CD14-positive monocyte (primary cell): ENCODE measurements at regions of chr11 and their contacts with region 1.

Region 1: DNA sequence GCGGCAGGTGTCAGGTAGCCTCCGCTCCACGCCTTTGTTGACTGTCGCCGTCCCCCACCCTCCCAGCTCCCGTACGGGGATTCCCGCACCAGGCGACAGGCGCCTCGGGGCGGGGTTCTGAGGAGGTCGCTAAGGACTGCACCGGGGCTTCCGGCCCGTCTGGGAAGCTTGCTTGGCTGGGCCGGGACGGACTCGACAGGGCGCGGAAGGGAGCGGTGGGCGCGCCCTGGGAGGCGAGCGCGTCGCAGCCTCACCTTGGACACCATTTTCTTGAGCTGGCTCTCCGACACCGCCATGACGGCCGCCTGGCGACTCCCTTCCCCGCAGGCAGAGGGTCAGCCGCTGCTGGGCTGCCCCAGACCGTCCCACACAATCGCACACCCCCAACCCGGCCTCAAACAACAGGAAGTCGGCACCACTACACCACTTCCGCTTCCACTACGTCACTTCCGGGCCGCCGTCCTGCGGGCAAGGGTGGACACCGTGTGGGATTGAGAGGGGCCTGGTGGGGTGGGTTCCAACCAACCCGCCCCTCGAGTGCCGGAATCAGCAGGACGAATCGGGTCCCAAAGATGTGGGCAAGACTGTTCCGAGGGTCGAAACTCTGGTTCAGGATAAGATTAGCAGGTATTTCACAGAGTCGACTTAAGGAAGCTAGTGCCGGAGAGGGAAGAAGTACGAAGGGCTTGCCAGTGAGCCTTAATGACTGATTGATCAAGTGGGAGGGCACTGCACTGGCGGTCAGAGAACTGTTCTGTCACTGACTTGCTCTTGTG is at the start of gene TSG101:
- DNase-seq: peak; percentile 90 to 97 (median 96)
- H3K4me3 ChIP-seq: peak within 1 kb of the TSS; percentile 68 to 95 (median 89)
- H3K4me3 Mint-ChIP-seq: peak within 1 kb of the TSS; percentile 94 to 99
- H3K27ac ChIP-seq: peak within 1 kb of the TSS; percentile 99 to 100
- H3K27ac Mint-ChIP-seq: peak within 1 kb of the TSS; percentile 100
- H3K4me1 ChIP-seq: peaks cover 14 to 19% of the 10 kb centered on the region in 2 donors
- H3K4me1 Mint-ChIP-seq: peaks cover 18% of the 10 kb centered on the region
- H3K27me3 ChIP-seq: no peaks in the 10 kb centered on the region
- H3K27me3 Mint-ChIP-seq: no peaks in the 10 kb centered on the region
- CTCF ChIP-seq: no peak
- polyA plus RNA-seq, gene TSG101: 76.7 to 116 (median 112) TPM

Region 2: DNA sequence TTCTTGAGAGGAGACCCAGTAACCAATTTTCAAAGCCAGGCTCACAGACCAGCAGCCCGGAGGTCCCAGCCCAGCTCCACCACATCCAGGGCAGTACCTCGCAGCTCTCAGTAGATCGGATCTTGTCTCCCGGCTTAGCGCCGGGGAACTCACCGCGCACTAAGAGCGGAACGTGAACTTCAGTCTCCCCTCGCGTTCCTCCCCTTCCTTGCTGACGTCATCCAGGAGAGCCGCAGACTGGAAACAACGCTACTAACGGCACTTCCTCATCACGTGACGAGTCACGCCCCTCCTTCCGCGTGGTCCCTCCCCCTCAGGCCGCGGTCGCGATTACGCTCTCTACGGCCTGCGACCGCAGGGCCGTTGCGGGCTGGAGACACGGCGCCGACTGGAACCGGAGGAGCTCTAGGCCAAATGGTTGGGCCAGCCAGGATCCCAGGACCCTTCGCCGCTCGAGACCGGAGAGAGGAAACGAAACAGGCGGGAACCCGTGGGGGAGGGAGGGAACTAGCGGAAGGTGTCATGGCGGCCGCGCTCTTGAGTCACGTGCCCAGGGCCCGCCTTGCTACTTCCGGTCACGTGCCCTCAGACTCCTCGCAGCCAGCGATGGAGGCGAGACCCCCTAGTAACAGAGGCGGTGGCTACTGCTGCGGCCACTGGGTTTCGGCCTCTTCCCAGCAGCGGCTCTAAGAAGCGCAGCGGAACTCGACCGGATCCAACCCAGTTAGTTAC is 204.6 kb before region 1 on chr11 and contains the starts of genes GTF2H1 and HPS5:
- intact Hi-C with region 1: loop called (anchors 5 kb)
- DNase-seq: peak; percentile 98 to 99 (median 99)
- H3K4me3 ChIP-seq: peak within 1 kb of the TSS; percentile 58 to 82 (median 82)
- H3K4me3 Mint-ChIP-seq: peak within 1 kb of the TSS; percentile 95 to 97
- H3K27ac ChIP-seq: peak within 1 kb of the TSS; percentile 93 to 94
- H3K27ac Mint-ChIP-seq: peak within 1 kb of the TSS; percentile 99 to 100 (median 100)
- H3K4me1 ChIP-seq: peaks cover 35 to 50% of the 10 kb centered on the region in 2 donors
- H3K4me1 Mint-ChIP-seq: peaks cover 60% of the 10 kb centered on the region
- H3K27me3 ChIP-seq: no peaks in the 10 kb centered on the region
- H3K27me3 Mint-ChIP-seq: no peaks in the 10 kb centered on the region
- CTCF ChIP-seq: no peak
- polyA plus RNA-seq, gene GTF2H1: 23.0 to 26.6 (median 26.2) TPM
- polyA plus RNA-seq, gene HPS5: 11.4 to 17.7 (median 12.9) TPM

Region 3: DNA sequence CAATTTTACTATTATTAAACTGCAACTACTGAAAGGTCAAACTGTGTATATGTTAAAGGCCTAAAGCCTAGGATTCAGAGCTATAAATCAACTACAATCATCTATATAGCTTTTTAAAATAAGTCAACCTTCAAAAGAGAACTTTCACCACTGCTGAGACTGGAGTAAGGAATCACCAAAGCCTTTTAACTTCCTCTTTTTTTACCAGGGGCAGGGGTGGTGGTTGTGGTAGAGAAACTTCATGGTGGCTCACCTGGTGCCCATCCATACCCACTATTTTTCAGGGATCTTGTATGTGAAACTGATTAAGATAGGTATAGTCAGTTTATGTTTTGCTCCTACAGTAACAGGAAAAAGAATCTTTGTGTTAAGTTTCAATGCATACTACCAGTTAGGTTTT is 31.4 kb before region 1 on chr11:
- intact Hi-C with region 1: no loop called
- DNase-seq: peak in 2 of 3 donors; percentile 3 to 5
- H3K4me3 ChIP-seq: no peak overlapping the region
- H3K4me3 Mint-ChIP-seq: no peak overlapping the region
- H3K27ac ChIP-seq: peak overlapping the region in 1 of 2 donors; percentile 52
- H3K27ac Mint-ChIP-seq: peak overlapping the region in 1 of 7 donors; percentile 63
- H3K4me1 ChIP-seq: no peaks in the 10 kb centered on the region
- H3K4me1 Mint-ChIP-seq: no peaks in the 10 kb centered on the region
- H3K27me3 ChIP-seq: no peaks in the 10 kb centered on the region
- H3K27me3 Mint-ChIP-seq: no peaks in the 10 kb centered on the region
- CTCF ChIP-seq: no peak

Region 4: GRCh38 chr11:18567081-18567480 is 40.4 kb after region 1 on chr11:
- intact Hi-C with region 1: no loop called
- DNase-seq: no peak
- H3K4me3 ChIP-seq: no peak overlapping the region
- H3K4me3 Mint-ChIP-seq: no peak overlapping the region
- H3K27ac ChIP-seq: no peak overlapping the region
- H3K27ac Mint-ChIP-seq: no peak overlapping the region
- H3K4me1 ChIP-seq: no peaks in the 10 kb centered on the region
- H3K4me1 Mint-ChIP-seq: peaks cover 3% of the 10 kb centered on the region
- H3K27me3 ChIP-seq: no peaks in the 10 kb centered on the region
- H3K27me3 Mint-ChIP-seq: peaks cover 0 to 8% (median 0%) of the 10 kb centered on the region in 3 donors
- CTCF ChIP-seq: no peak

Region 5: DNA sequence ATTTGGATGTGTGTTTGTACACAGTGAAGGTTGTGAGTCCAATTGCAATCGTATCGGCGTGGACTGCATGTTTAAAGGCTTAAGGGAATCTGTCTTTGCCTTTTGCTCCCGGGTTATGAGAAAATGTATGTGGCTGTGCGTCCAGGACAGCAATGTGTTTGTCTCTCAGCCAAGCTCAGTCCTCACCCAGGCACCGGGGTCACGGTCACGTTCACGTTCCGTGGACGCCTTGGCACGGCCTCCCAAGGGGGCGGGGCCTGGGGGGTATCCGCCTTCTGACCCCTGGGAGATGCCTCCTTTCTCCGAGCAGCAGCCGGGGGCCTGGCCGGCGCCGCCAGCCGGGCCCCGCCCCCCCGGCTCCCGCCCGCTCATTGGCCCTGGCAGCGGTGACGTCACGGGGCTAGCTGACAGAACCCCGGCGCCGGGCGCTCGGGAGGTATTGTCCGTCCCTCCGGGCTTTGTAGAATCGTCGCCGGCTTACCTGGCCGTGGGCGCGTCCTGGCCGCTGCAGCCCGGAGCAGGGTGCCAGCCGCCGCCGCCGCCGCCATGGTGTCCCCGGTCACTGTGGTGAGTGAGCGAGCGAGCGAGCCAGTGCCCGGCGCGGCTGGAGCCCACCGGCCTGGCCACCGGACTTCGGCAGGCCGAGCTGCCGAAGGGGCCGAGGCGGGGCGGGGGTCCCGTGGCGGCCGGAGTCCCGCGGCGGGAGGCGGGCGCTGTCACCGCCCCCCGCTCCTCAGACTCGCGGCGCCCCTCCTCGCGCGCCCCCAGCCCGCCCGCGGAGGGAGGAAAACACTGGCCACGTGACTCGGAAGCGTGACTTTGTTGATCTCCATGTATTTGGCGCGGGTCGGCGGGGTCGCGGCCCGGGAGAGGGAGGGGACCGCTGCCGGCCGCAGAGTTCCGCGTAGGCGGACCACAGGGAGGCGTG is 171.9 kb after region 1 on chr11 and contains the start of gene TMEM86A:
- intact Hi-C with region 1: loop called in 1 of 2 experiments (anchors 10 kb)
- DNase-seq: peak; percentile 88 to 90 (median 89)
- H3K4me3 ChIP-seq: peak within 1 kb of the TSS; percentile 42 to 79 (median 75)
- H3K4me3 Mint-ChIP-seq: peak within 1 kb of the TSS; percentile 79 to 87
- H3K27ac ChIP-seq: peak within 1 kb of the TSS; percentile 31 to 77
- H3K27ac Mint-ChIP-seq: peak within 1 kb of the TSS; percentile 91 to 94 (median 93)
- H3K4me1 ChIP-seq: peaks cover 35 to 40% of the 10 kb centered on the region in 2 donors
- H3K4me1 Mint-ChIP-seq: peaks cover 34% of the 10 kb centered on the region
- H3K27me3 ChIP-seq: no peaks in the 10 kb centered on the region
- H3K27me3 Mint-ChIP-seq: peaks cover 4 to 12% (median 5%) of the 10 kb centered on the region in 3 donors
- CTCF ChIP-seq: no peak
- polyA plus RNA-seq, gene TMEM86A: 1.3 to 4.3 (median 3.5) TPM